HEK293 (cell line): ENCODE measurements at regions of chr1 and their contacts with region 1.

Region 1: GRCh38 chr1:41416552-41417334 is 55.5 kb downstream of the FOXO6 start:
- H3K4me3 ChIP-seq: no peak overlapping the region
- H3K27ac ChIP-seq: no peak overlapping the region
- H3K4me1 ChIP-seq: no peaks in the 10 kb centered on the region
- CTCF ChIP-seq: peak; percentile 93

Region 2: DNA sequence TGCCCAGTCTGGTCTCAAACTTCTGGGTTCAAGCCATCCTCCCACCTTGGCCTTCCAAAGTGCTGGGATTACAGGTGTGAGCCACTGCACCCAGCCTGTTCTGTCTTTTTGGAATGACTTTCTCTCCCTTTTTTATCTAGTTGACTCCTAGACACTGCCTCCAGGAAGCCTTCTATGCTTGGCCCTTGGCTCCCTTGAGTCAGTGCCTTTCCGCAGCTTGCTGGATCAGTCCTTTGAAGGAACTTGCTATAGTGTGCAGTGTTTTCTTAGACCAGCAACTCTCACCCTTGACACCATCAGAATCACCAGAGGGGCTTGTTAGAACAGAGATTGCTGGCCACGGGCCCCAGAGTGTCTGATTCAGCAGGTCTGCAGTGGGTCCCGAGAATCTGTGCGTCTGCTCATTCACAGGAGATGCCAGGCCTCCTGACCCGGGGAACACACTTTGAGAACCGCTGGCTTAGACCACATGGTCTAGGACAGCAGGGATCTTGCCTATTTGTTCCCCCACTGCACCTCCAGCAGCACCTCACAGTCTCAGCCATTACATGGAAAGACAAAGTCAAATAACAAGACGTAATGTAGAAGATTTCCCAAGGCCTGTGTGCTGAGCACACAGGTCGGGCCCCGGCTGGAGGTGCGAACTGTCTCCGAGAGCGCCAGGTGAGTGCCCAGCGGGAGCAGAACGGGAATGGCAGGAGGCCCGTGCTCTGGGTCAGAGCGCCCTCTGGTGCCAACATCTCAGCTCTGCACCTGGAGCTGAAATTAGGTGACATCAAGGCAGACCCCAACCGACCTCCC is 464.6 kb before region 1 on chr1:
- CTCF ChIA-PET with region 1: no interaction called
- POLR2A ChIA-PET with region 1: no interaction called
- H3K4me3 ChIP-seq: no peak overlapping the region
- H3K27ac ChIP-seq: no peak overlapping the region
- H3K4me1 ChIP-seq: no peaks in the 10 kb centered on the region
- CTCF ChIP-seq: peak; percentile 88

Region 3: GRCh38 chr1:41149570-41149969 is 267.2 kb before region 1 on chr1:
- CTCF ChIA-PET with region 1: no interaction called
- POLR2A ChIA-PET with region 1: no interaction called
- H3K4me3 ChIP-seq: no peak overlapping the region
- H3K27ac ChIP-seq: no peak overlapping the region
- H3K4me1 ChIP-seq: no peaks in the 10 kb centered on the region
- CTCF ChIP-seq: no peak

Region 4: GRCh38 chr1:41313661-41314131 is 103.0 kb before region 1 on chr1:
- CTCF ChIA-PET with region 1: interaction called, 49 read pairs
- POLR2A ChIA-PET with region 1: interaction called, 3 read pairs
- H3K4me3 ChIP-seq: no peak overlapping the region
- H3K27ac ChIP-seq: no peak overlapping the region
- H3K4me1 ChIP-seq: no peaks in the 10 kb centered on the region
- CTCF ChIP-seq: no peak

Region 5: DNA sequence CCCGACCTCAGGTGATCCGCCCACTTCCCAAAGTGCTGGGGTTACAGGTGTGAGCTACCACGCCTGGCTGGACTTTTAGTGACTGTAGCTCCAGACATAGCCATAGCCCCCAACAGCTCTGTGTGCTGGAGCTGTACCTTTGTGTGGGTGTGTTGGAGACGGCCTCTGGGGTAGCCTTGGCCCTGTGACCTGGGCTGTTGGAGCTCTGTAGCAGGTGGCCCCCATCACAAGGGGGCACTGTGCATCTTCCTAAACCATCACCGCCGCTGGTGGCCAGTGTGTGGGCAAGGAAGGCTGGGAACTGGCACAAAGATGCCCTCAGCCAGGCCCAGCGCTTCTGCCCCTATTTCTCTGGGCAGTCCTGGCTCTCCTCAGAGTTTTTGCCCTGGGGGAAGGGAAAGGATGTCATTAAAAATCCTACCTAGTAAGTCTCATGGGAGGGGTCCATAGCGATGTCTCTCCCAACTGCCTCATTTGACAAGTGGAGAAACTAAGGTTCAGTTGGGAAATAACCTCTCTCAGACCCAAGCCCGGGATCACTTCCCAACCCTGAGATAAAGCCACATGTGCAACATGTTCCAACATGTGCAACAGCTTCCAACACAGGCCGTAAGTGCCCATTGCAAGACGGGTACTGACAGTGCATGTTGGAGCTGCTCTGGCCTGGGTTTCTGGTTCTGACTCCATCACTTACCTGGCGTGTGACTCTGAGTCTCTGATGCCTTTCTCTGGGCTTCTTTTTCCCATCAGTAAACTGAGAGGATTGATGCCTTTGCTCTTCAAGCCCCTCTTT is 93.7 kb before region 1 on chr1:
- CTCF ChIA-PET with region 1: interaction called, 62 read pairs
- POLR2A ChIA-PET with region 1: interaction called, 3 read pairs
- H3K4me3 ChIP-seq: no peak overlapping the region
- H3K27ac ChIP-seq: no peak overlapping the region
- H3K4me1 ChIP-seq: no peaks in the 10 kb centered on the region
- CTCF ChIP-seq: peak; percentile 70

Region 6: DNA sequence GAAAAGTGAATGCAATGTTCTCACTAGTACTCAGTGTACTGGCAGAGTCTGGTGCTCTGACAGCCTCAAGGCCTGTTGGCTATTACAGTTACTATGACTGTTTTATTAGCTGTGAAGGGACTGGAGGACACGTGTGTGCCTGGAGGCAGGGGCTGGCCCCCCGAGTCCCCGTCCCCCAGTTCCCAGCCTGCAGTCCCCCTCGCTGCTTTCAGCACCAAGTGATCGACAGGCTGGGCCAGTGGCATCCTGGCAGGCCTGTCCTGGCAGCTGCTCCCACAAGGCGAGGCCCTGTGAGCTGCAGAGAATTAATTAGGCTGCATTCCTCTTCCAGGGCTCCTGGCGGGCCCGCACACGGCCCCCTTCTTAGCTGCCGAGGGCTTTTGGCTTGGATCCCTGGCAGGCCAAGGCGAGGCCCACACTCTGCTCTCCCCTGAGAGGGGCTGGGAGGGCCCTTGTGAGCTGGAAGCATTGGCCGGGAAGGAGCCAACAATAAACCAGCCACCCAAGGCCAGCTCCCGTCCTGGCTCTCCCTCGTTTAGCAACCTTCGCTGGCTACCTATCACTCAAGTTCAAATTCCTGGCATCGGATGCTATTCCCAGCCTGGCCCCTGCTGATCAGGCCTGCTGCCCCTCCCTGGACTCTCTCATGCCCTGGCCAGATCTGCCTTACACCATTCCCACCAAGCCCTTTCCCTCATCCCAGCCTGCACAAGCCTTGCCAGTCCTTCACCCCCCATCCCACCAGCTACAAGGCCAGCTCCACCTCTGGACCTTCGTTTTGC is 57.9 kb after region 1 on chr1:
- CTCF ChIA-PET with region 1: no interaction called
- POLR2A ChIA-PET with region 1: no interaction called
- H3K4me3 ChIP-seq: no peak overlapping the region
- H3K27ac ChIP-seq: no peak overlapping the region
- H3K4me1 ChIP-seq: no peaks in the 10 kb centered on the region
- CTCF ChIP-seq: no peak

Region 7: DNA sequence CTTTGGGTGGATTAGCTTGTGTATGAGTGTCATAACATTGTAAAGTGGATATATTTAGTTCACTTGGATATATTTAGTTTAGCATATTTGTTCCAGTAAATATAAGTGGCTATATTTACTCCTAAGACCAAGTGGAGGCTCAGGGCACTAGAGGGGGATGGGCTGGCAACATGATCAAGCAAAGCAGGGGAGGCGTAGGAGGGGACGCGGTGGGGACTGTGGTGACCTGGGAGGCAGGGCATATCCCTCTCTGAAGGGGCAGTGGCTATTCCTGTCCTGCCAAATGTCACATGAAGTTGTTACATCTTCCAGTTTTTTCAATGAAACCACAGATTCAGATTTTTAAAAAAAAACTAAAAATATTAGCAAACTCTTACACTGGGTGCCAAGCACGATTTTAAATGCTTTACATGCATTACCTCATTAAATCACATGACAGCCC is 119.6 kb after region 1 on chr1:
- CTCF ChIA-PET with region 1: no interaction called
- POLR2A ChIA-PET with region 1: no interaction called
- H3K4me3 ChIP-seq: no peak overlapping the region
- H3K27ac ChIP-seq: no peak overlapping the region
- H3K4me1 ChIP-seq: peaks cover 14% of the 10 kb centered on the region
- CTCF ChIP-seq: no peak